ENCODE measurements at regions of chr9 and their contacts with region 1.

Region 1: DNA sequence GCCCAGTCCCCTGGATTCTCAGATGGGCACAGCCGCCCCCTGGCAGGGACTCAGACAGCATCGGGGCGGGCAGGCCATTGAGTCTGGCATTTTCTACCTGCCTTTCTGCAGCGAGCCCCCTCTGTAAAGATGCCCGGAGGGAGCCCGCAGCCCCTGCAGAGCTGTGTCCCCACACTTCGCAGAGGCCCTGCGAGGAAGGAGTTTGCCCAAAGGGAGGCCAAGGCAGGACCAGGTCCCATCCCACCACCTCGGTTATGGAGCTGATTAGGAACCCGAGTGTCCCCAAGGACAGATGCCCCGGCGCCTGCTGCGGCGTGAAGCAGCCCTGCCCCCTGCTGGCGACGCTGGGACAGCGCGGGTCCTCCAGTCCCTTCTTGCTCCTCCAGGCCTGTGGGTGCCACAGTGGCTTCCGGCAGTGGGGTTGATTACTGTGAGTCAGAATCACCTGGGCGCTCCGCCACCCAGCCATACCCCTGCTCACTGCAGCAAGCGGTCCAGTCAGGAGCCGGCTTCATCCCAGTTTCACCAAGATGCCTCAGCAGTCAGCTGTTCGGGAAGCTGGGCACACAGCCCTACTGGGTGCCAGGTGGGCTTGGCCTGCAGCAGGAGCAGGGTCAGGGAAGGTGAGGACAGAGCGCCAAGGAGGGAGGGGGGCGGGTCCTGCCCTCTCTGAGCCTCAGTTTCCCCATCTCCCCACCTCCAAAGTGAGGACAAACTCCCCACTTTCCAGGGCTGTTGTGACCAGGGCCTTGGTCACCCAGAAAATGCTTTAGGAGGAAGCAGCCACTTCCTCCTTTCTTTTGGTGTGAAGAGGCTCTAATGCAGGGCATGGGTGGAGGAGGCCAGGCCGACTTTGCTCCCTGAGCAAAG is 117.1 kb downstream of the RXRA start:
- DNase-seq: peak; percentile 99
- H3K27ac ChIP-seq: peak overlapping the region; percentile 84
- CTCF ChIP-seq: peak; percentile 100

Region 2: DNA sequence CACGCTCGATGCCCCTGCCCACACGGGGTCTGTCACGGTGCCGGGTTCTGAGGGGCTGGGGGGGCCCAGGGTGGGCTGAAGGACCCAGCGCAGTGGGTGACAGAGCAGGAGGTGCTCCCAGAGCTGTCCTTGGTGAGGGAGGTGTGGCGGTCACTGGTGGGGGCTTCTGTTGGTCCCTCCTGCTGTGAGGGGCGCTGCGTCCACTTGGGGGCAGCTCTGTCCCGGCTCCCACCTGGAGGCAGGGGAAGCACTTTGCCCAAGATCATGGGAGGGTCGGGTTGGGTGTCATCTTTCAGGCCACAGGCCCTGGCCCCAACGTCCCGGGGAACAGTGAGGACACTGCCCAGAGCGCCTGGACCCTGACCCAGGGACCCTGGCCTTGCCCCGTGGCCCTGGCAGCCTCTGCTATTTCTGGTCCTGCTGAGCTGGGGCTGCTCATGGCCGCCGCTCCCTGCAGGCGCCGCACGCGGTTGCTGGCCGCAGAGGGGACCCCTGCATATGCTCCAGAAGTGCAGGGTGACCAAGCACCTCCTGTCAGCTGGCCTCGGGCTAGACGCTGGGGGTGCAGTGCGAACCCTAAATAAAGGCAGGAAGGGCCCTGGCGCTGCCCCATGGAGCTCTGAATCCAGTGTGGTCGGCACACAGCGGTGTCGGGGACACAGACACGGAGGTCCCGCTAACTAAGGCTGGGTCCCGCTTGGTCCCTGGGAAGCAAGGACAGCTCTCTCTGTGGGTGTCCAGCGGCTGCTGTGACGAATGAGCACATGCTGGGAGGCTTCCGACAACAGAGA is 267.4 kb before region 1 on chr9:
- CTCF ChIA-PET with region 1: interaction called, 65 read pairs
- POLR2A ChIA-PET with region 1: interaction called, 3 read pairs
- DNase-seq: no peak
- H3K27ac ChIP-seq: no peak overlapping the region
- CTCF ChIP-seq: no peak; the same call in 1 of the 2 replicates

Region 3: DNA sequence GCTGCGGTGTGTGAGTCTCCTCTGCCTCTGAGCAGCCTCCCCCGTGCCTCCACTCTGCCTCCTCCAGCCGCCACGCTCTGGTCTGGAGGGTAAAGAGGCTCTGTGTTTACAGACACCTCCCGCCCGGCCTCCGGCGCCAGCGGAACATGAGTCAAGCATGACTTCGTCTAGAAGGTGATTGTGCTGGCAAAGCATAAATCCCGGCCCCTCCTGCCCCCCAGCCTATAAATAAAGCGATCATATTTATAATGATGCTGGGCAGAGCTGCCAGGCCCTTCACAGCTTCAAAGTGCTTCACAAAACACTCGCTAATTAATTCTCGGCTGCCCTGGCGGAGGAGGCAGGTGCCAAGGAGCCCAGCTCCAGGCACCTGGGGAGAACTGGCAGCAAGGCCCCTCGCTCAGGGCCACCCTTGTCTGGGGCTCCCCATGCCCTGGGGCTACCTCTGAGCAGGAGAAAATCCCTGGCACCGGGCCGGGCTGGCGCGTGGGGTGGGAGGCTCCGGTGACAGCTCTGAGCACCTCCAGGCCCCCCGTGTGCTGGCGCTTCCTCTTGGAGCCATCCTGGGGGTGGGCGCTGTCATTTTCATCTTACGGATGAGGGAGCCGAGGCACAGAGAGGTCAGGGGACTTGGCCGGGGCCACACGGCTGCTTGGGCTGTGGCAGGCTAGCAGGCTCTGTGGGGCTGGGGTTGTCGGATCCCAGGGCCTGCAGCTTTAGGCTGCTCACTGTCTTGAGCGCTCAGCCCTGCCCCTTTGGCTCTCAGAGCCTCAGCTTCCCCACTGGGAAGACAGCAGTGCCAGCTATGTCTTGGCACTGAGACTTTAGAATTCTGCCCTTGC is 29.3 kb before region 1 on chr9:
- CTCF ChIA-PET with region 1: interaction called, 19 read pairs
- POLR2A ChIA-PET with region 1: no interaction called
- DNase-seq: peak; percentile 97
- H3K27ac ChIP-seq: peak overlapping the region; percentile 97
- CTCF ChIP-seq: no peak

Region 4: GRCh38 chr9:134585746-134586706 is 142.6 kb after region 1 on chr9:
- CTCF ChIA-PET with region 1: no interaction called
- POLR2A ChIA-PET with region 1: no interaction called
- DNase-seq: peak; percentile 82
- H3K27ac ChIP-seq: no peak overlapping the region
- CTCF ChIP-seq: no peak